ENCODE measurements at regions of chr17 and their contacts with region 1.

Region 1: DNA sequence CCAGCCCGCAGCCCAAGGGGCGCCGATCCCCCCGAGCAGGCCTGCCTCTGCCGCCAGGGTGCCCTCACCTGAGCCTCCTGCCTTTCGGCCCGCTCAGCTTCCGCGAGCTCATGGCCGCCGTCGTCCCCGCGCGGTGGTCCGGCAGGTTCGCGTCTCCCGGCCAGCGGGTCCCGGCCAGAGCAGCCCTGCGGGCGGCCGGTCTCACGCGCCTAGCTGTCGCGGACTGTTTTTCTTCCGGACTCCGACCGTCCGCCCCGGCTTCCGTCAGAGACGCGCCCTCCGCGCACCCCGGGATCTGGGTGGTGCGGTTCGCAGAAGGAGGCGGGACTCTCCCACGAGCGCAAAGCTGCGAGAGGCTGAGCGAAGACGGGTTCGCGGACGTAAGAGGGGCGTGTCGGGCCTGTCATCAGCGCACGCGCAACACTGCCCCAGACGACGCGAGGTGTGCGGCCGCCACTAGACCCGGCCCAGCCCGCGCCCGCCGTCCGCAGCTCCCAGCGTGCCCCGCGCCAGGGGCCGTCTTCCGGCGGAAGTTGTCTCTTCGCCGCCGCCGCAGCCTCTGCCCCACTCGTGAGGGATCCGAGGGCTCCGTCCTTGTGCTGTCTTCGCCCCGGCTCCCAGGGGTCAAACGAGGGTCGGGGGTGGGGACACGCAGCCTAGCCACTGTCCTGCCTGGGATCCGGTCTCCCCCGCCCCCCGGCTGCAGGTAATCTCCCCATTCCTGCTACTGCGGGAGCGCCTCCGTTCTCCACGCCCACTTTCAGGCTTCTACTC is at the start of gene INPP5K:
- DNase-seq: peak; percentile 97 to 99 (median 99)
- ATAC-seq: peak; percentile 94
- H3K4me3 ChIP-seq: peak within 1 kb of the TSS; percentile 76 to 94
- H3K27ac ChIP-seq: peak within 1 kb of the TSS; percentile 88 to 95
- H3K4me1 ChIP-seq: peaks cover 22 to 57% of the 10 kb centered on the region in 2 donors
- H3K27me3 ChIP-seq: no peaks in the 10 kb centered on the region
- CTCF ChIP-seq: no peak
- polyA plus RNA-seq, gene INPP5K: 23.6 to 34.1 (median 26.5) TPM

Region 2: DNA sequence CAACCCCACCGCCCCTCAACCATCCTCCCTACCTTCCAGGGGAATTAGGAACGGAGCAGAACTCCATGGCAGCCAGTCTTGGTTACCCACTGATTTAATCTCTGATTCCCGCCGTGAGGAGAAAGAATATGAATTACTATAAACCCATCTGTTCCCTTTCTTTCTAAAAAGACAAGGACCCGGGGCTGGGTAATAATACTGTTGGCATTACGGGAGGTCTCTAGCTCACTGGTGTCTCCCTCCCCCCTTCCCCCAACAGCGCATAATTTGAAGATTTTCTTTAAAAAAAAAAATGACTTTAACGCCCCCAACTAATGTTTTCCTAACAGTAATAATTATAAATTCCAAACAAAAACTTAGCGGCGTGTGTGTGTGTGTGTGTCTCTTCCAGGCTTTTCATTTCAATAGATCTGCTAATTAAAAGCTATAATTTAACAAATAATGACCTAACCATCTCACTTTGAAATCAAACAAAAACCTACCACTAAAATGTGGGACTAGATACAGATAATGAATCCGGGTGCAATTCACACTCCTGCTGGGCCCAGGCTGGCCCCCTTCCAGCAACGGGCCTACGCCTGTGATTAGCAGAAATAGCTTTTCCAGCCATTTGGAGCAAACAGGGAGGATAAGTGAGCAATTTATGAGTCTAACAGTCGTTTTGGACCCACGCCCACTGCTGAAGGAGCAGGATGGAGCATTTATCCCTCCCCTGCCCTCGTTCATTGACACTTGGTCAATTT is 264.5 kb before region 1 on chr17:
- intact Hi-C with region 1: no loop called
- DNase-seq: no peak
- ATAC-seq: no peak
- H3K4me3 ChIP-seq: no peak overlapping the region
- H3K27ac ChIP-seq: no peak overlapping the region
- H3K4me1 ChIP-seq: peaks cover 0 to 20% of the 10 kb centered on the region in 2 donors
- H3K27me3 ChIP-seq: peaks cover 0 to 22% of the 10 kb centered on the region in 2 donors
- CTCF ChIP-seq: no peak

Region 3: GRCh38 chr17:1275962-1276736 is 240.4 kb before region 1 on chr17:
- intact Hi-C with region 1: loop called in 1 of 2 experiments (anchors 10 kb)
- DNase-seq: peak in 3 of 4 donors; percentile 52 to 86 (median 64)
- ATAC-seq: peak; percentile 85
- H3K4me3 ChIP-seq: no peak overlapping the region
- H3K27ac ChIP-seq: no peak overlapping the region
- H3K4me1 ChIP-seq: no peaks in the 10 kb centered on the region
- H3K27me3 ChIP-seq: peaks cover 10 to 76% of the 10 kb centered on the region in 2 donors
- CTCF ChIP-seq: peak; percentile 74 to 77

Region 4: GRCh38 chr17:1347589-1348323 is 168.8 kb before region 1 on chr17:
- intact Hi-C with region 1: loop called in 1 of 2 experiments (anchors 10 kb)
- DNase-seq: peak in 2 of 4 donors; percentile 9 to 24
- ATAC-seq: peak; percentile 62
- H3K4me3 ChIP-seq: no peak overlapping the region
- H3K27ac ChIP-seq: peak overlapping the region; percentile 68 to 71
- H3K4me1 ChIP-seq: peaks cover 0 to 34% of the 10 kb centered on the region in 2 donors
- H3K27me3 ChIP-seq: no peaks in the 10 kb centered on the region
- CTCF ChIP-seq: no peak

Region 5: DNA sequence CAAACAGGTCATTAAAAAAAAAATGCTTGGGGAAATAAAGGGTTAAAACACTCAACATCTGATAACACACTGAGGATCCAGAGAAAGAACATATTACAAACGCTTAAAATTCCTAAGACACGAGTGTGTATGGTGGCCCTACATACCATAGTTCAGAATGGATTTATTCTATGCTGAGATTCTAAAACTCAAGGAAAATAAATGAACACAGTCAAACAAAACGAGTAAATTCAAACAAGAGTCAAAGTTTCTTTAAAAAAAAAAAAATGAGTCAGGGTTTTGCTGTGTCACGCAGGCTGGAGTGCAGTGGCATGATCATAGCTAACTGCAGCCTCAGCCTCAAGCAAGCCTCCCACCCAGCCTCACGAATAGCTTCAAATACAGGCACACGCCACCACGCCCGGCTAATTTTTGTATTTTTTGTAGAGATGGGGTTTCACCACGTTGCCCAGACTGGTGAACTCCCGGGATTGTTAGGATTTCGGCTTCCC is 77.9 kb before region 1 on chr17:
- intact Hi-C with region 1: no loop called
- DNase-seq: no peak
- ATAC-seq: peak; percentile 65
- H3K4me3 ChIP-seq: no peak overlapping the region
- H3K27ac ChIP-seq: no peak overlapping the region
- H3K4me1 ChIP-seq: peaks cover 0 to 35% of the 10 kb centered on the region in 2 donors
- H3K27me3 ChIP-seq: no peaks in the 10 kb centered on the region
- CTCF ChIP-seq: no peak

Region 6: DNA sequence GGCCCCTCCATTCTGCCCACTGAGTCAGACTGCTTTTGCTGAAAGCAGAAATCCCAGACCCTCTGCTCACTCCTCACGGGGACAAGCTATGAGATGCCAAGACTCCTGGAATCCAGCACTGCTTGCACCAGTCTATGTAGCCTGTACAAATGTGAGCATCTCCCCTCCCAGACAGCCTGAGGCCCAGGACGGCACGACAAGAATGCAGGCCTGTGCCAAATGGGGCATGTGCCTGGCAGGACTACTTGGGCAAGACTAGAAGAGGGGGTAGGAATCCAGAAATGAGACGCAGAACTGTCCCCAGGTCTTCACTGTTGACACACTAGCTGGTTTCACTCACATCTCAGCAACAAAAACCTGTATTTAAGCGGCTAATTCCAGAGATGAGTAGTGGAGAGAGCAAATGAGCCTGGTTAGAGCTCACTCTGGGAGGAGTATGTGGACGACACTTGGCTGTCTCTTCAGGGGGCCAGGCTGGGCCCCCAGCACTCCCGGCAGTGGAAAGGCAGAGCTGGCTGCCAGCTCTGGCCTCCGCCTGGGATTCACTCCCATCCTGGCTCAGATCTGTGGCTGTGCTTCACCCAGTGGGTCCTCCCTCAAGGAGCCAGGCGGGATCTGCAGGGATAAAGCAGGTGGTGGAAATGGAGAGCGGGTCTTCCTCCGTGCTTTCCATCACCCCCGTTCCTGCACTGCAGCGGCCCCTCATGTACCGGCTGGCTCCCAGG is 21.1 kb before region 1 on chr17:
- intact Hi-C with region 1: loop called in 1 of 2 experiments (anchors 2 kb)
- DNase-seq: no peak
- ATAC-seq: no peak
- H3K4me3 ChIP-seq: no peak overlapping the region
- H3K27ac ChIP-seq: peak overlapping the region; percentile 3 to 90
- H3K4me1 ChIP-seq: peaks cover 0 to 41% of the 10 kb centered on the region in 2 donors
- H3K27me3 ChIP-seq: peaks cover 0 to 20% of the 10 kb centered on the region in 2 donors
- CTCF ChIP-seq: no peak

Region 7: DNA sequence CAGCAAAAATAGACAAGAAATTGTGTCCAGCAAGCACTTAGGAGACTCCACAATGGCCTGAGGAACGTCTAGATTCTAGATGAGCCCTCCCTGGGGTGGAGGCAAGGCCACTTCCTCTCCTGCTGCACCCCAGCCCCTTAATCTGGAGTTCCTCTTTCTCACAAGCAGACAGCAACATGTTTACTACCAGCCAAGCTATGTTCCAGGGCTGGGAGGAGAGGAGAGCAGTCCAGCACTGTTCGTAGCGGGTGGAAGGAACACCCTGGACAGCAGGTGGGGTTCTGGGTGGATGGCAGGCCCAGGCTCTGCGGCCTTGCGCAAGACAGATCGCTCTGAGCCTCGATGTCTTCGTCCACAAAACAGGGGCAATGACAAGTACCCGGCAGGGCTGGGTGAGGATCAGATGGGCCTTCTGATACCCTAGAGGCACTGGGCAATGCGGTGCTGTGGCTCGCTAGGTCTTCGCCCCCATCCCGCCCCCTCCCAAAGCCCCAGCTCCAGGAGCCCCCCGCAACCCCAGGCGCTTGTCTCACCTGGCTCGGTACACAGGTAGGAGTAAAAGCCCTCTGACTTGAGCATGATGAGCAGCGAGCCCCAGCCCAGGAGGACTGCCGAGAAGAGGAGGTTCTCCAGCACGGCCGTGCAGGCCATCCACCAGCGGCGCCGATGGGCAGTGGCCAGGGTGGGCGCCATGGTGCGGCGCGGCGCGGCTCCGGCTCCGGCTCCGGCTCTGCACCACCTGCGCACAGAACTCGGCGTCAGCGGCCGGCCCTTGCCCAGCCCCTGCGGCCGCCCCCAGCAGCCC is 110.8 kb after region 1 on chr17:
- intact Hi-C with region 1: no loop called
- DNase-seq: peak in 1 of 4 donors; percentile 89
- ATAC-seq: peak; percentile 2
- H3K4me3 ChIP-seq: peak overlapping the region; percentile 78 to 94
- H3K27ac ChIP-seq: peak overlapping the region; percentile 95
- H3K4me1 ChIP-seq: peaks cover 26 to 70% of the 10 kb centered on the region in 2 donors
- H3K27me3 ChIP-seq: no peaks in the 10 kb centered on the region
- CTCF ChIP-seq: no peak